ENCODE measurements at regions of chr20 and their contacts with region 1.

Region 1: DNA sequence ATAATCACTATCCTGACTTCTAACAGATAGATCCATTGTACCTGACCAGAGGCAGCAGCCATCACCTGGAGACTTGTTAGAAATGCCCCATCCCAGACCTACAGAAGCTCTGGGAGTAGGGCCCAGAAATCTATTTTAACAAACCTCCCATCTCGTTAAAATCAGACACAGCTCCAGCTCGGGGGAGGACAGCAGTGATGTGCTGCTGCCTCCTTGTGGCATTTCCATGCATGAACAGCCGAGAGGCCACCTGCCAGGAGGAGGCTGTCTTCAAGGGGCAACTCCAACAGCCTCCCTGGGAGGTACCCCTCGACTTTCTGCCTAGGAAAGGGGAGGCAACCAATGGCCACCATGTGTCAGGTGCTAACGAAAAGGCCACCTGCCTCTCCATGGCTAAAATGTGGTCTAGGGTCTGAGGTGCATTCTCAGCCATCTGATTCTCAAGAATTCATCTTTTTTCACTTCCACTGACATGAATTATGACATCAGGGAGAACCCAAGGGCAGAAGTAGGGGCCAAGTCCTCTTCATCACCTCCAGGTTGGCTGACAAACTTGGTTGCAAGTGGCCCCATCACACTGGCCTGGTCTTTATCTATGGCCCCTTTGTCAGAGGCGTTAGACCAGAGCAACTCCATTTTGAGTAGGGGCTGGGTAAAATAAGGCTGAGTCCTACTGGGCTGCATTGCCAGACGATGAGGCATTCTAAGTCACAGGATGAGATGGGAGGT is 12.2 kb upstream of the KCNK15 start:
- DNase-seq: peak; percentile 67
- ATAC-seq: peak; percentile 76
- H3K4me3 ChIP-seq: no peak overlapping the region
- H3K27ac ChIP-seq: no peak overlapping the region
- H3K4me1 ChIP-seq: peaks cover 9% of the 10 kb centered on the region
- H3K27me3 ChIP-seq: peaks cover 0 to 12% of the 10 kb centered on the region in 2 experiments; a peak in 1 of 5 replicates
- CTCF ChIP-seq: peak; percentile 94
- EP300 ChIP-seq: no peak
- POLR2A ChIP-seq: no peak
- RAD21 ChIP-seq: peak; percentile 89

Region 2: GRCh38 chr20:44683263-44684046 is 50.0 kb before region 1 on chr20:
- CTCF ChIA-PET with region 1: interaction called, 170 read pairs
- POLR2A ChIA-PET with region 1: no interaction called
- in situ Hi-C with region 1: loop called (anchors 5 kb)
- intact Hi-C with region 1: loop called (anchors 1 kb)
- DNase-seq: peak; percentile 63
- ATAC-seq: peak; percentile 80
- H3K4me3 ChIP-seq: no peak overlapping the region
- H3K27ac ChIP-seq: no peak overlapping the region
- H3K4me1 ChIP-seq: peaks cover 15% of the 10 kb centered on the region
- H3K27me3 ChIP-seq: peaks cover 0 to 3% of the 10 kb centered on the region in 2 experiments; a peak in 2 of 5 replicates
- CTCF ChIP-seq: peak; percentile 85
- EP300 ChIP-seq: no peak
- POLR2A ChIP-seq: no peak
- RAD21 ChIP-seq: peak; percentile 52; the same call in 1 of the 2 replicates

Measured in HepG2 (cell line).